ENCODE measurements at regions of chr21 and their contacts with region 1.

Region 1: GRCh38 chr21:42062236-42063022 is 8.7 kb upstream of the UMODL1 start:
- DNase-seq: peak; percentile 63 to 99 (median 97)
- ATAC-seq: peak; percentile 91
- H3K4me3 ChIP-seq: peak overlapping the region; percentile 64
- H3K4me3 Mint-ChIP-seq: peak overlapping the region; percentile 85 to 95 (median 92)
- H3K27ac ChIP-seq: peak overlapping the region; percentile 85
- H3K27ac Mint-ChIP-seq: peak overlapping the region; percentile 94 to 100 (median 99)
- H3K4me1 ChIP-seq: peaks cover 20 to 32% of the 10 kb centered on the region in 2 donors
- H3K4me1 Mint-ChIP-seq: peaks cover 28 to 76% (median 55%) of the 10 kb centered on the region in 7 donors
- H3K27me3 ChIP-seq: no peaks in the 10 kb centered on the region
- H3K27me3 Mint-ChIP-seq: peaks cover 0 to 5% (median 0%) of the 10 kb centered on the region in 5 donors

Region 2: DNA sequence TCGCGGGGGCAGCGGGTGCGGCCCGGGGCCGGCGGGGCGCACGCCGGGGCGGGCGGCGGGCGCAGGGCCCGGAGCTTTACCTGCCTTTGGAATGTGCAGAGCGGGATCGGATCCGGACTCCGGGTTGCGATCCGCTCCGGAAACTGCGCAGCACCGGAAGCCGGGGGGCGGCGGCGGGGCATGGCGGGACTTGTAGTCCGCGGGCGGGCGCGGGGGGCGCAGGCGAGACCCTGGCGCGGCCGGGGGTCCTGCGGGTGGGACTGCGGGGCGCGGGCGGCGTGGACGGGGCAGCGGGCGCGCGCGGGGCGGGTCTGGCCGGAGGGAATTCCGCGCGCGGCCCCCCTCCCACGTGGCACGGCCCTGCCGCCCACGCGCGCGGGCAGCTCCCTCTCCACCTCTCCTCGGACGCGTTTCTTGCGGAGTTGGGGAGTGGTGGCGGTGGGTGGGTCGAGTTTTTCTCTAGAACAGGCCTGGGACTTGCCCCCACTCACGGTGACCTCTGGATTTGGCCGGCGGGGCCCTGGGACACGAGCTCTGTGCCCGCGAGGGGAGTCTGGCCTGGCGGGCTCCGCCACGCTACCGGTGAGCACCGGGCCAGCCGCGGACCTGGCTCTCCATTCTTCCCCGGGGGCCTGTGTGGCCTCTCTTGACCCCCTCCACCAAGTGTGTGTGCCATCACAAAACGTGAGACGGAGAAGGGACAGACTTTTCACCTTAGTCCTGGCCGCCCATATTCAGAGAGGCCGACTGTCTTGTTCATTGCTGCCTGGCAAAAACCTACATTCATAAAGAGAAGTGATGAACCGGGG is 183.0 kb before region 1 on chr21 and contains the start of gene PRDM15:
- CTCF ChIA-PET with region 1: no interaction called
- POLR2A ChIA-PET with region 1: interaction called, 10 read pairs
- intact Hi-C with region 1: loop called (anchors 1 to 2 kb)
- DNase-seq: peak; percentile 69 to 88 (median 77)
- ATAC-seq: peak; percentile 85
- H3K4me3 ChIP-seq: peak within 1 kb of the TSS; percentile 84
- H3K4me3 Mint-ChIP-seq: peak within 1 kb of the TSS; percentile 88 to 95 (median 92)
- H3K27ac ChIP-seq: peak within 1 kb of the TSS; percentile 85
- H3K27ac Mint-ChIP-seq: peak within 1 kb of the TSS; percentile 92 to 97 (median 95)
- H3K4me1 ChIP-seq: peaks cover 9 to 16% of the 10 kb centered on the region in 2 donors
- H3K4me1 Mint-ChIP-seq: peaks cover 20 to 35% (median 29%) of the 10 kb centered on the region in 7 donors
- H3K27me3 ChIP-seq: no peaks in the 10 kb centered on the region
- H3K27me3 Mint-ChIP-seq: no peaks in the 10 kb centered on the region
- total RNA-seq, gene PRDM15: 10.0 to 20.1 (median 15.9) TPM

Region 3: DNA sequence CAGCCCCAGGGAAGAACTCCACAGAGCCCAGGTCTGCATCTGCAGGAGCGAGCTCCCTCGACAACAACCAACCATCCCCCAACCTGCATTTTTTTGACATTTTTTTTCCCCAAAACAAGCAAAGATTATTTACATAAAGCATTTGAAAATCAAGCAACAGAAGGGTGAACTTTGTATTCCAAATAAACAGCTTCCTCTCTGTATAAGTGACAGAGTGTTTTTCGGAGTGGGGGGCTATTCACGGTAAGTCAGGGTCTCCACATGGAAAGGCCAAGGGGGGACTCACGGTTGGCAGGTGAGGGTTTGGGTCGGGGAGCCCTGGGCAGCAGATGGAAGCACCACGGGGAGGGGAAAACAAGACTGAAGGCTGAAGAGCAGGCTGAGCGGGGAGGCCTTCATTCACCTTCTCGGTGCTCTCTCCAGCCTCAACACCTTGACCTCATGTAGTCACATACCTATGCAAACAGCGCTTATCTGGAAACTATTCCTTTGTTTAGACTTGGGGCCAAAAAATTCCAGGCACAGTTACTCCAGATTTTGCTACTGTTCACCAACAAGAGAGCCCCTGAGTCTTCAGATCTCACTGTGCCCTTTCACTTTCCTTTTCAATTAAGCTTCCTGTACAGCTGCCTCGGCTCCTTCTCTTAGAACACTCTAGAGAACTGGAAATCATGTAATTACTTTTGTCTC is 136.2 kb before region 1 on chr21:
- CTCF ChIA-PET with region 1: no interaction called
- POLR2A ChIA-PET with region 1: interaction called, 36 read pairs
- intact Hi-C with region 1: loop called (anchors 1 to 2 kb)
- DNase-seq: peak in 8 of 9 donors; percentile 36 to 75 (median 66)
- ATAC-seq: peak; percentile 85
- H3K4me3 ChIP-seq: peak overlapping the region; percentile 78
- H3K4me3 Mint-ChIP-seq: peak overlapping the region; percentile 88 to 99 (median 95)
- H3K27ac ChIP-seq: peak overlapping the region; percentile 91
- H3K27ac Mint-ChIP-seq: peak overlapping the region; percentile 94 to 100 (median 99)
- H3K4me1 ChIP-seq: peaks cover 12 to 37% of the 10 kb centered on the region in 2 donors
- H3K4me1 Mint-ChIP-seq: peaks cover 45 to 69% (median 61%) of the 10 kb centered on the region in 7 donors
- H3K27me3 ChIP-seq: no peaks in the 10 kb centered on the region
- H3K27me3 Mint-ChIP-seq: no peaks in the 10 kb centered on the region

Region 4: DNA sequence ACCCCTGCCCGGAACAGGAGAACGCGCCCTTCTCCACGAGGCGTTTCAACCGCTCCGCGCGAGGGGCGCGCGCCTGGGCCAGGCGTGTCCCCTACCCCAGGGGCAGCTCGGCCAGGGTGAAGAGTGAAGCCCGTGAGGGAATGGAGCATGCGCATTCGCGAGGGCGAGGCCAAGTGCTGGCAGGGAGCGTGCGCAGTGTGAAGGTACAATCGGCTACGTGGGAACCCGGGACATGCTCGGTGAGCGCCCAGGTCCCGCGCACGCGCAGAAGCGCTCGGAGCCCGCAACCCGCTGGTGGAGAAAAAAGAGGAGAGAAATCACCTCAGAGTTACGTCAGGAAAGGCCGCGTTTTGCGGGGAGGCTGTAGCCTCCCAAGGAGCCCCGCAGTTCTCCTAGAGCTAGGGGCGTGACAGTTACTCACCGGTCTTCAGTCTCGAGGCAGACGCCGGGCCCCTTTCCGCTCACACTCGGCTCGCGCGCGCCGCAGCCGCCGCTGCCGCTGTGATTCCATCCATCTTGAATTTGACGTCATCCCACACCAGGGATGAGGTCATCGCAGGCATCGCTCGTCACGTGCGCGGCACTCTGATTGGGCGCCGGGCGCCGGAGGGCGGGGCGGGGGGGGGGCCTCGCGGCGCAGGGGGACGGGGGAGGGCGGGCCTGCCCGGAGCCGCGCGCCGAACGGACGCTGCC is 52.5 kb before region 1 on chr21 and contains the start of gene ZBTB21:
- CTCF ChIA-PET with region 1: interaction called, 9 read pairs
- POLR2A ChIA-PET with region 1: interaction called, 122 read pairs
- intact Hi-C with region 1: loop called (anchors 1 kb)
- DNase-seq: peak; percentile 96 to 99 (median 98)
- ATAC-seq: peak; percentile 87
- H3K4me3 ChIP-seq: peak within 1 kb of the TSS; percentile 78
- H3K4me3 Mint-ChIP-seq: peak within 1 kb of the TSS; percentile 93 to 99 (median 96)
- H3K27ac ChIP-seq: peak within 1 kb of the TSS; percentile 92
- H3K27ac Mint-ChIP-seq: peak within 1 kb of the TSS; percentile 99 to 100 (median 99)
- H3K4me1 ChIP-seq: peaks cover 0 to 5% of the 10 kb centered on the region in 2 donors
- H3K4me1 Mint-ChIP-seq: peaks cover 7 to 48% (median 41%) of the 10 kb centered on the region in 7 donors
- H3K27me3 ChIP-seq: no peaks in the 10 kb centered on the region
- H3K27me3 Mint-ChIP-seq: peaks cover 0 to 24% (median 0%) of the 10 kb centered on the region in 5 donors
- total RNA-seq, gene ZBTB21: 16.8 to 137 (median 25.2) TPM

Region 5: DNA sequence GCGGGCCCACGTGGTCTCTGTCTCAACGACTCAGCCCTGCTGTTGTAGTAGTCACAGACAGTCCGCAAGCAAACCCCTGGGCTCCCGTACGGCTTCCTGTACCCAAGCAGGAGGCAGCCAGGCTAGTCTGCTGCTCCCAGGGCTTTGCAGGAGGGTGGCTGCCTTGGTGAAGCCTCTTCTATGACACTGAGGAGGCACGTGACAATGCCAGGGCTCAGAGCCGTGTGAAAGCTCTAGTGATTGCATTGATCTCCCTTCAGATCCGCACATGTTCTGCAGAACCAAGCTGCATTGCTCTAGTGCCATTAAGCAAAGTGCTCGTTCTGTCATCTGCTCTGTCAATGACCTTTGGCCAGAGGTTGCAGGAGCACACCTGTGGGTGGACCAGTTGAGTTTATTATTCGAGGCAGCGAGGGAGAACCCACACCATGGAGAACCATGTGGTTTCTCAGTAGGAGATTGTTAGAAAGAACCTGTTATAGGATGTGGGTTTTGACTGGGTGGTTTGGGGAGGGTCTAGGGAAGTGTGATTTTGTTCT is 26.7 kb after region 1 on chr21:
- CTCF ChIA-PET with region 1: no interaction called
- POLR2A ChIA-PET with region 1: interaction called, 6 read pairs
- intact Hi-C with region 1: loop called in 1 of 2 experiments (anchors 1 kb)
- DNase-seq: peak in 7 of 9 donors; percentile 20 to 73 (median 57)
- ATAC-seq: peak; percentile 60
- H3K4me3 ChIP-seq: no peak overlapping the region
- H3K4me3 Mint-ChIP-seq: peak overlapping the region; percentile 17 to 82 (median 68)
- H3K27ac ChIP-seq: peak overlapping the region; percentile 56
- H3K27ac Mint-ChIP-seq: peak overlapping the region in 8 of 9 donors; percentile 26 to 95 (median 84)
- H3K4me1 ChIP-seq: peaks cover 9 to 11% of the 10 kb centered on the region in 2 donors
- H3K4me1 Mint-ChIP-seq: peaks cover 9 to 50% (median 29%) of the 10 kb centered on the region in 7 donors
- H3K27me3 ChIP-seq: no peaks in the 10 kb centered on the region
- H3K27me3 Mint-ChIP-seq: peaks cover 0 to 12% (median 0%) of the 10 kb centered on the region in 5 donors

Region 6: DNA sequence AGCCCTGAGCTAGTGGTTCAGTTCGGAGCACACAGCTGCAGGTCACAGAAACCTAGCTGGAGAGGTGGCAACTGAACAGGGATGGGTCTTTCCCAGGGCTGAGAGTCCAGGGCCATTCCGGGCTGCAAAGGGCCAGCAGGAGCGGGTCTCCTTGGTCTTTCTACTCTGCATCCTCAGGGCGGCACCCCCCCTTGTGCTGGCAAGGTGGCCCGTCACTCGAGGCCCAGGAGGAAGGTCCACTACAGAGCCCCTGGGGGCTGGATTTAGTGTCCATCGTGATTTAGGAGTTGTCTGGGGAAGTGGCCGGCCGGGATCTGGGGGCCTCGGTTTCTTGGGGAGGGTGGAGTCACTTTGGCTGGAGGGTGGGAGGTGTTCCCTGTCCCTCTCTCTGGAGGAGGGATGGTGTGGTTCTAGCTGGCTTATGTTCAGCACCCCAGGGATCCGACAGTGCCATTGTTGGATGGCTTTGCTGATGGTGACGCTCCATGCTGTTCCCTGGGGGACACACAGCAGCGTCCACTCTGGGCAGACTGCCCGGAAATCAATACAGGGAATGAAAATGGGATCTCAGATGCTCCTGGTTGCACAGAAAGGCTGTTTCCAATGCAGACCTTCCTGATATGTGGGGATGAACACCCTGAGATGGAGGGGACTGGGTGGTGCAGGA is 73.1 kb after region 1 on chr21:
- CTCF ChIA-PET with region 1: no interaction called
- POLR2A ChIA-PET with region 1: no interaction called
- intact Hi-C with region 1: no loop called
- DNase-seq: no peak
- ATAC-seq: no peak
- H3K4me3 ChIP-seq: no peak overlapping the region
- H3K4me3 Mint-ChIP-seq: no peak overlapping the region
- H3K27ac ChIP-seq: no peak overlapping the region
- H3K27ac Mint-ChIP-seq: no peak overlapping the region
- H3K4me1 ChIP-seq: no peaks in the 10 kb centered on the region
- H3K4me1 Mint-ChIP-seq: peaks cover 0 to 8% (median 0%) of the 10 kb centered on the region in 7 donors
- H3K27me3 ChIP-seq: no peaks in the 10 kb centered on the region
- H3K27me3 Mint-ChIP-seq: peaks cover 0 to 3% (median 0%) of the 10 kb centered on the region in 5 donors

Region 7: GRCh38 chr21:42187976-42188653 is 125.7 kb after region 1 on chr21:
- CTCF ChIA-PET with region 1: no interaction called
- POLR2A ChIA-PET with region 1: no interaction called
- intact Hi-C with region 1: loop called in 1 of 2 experiments (anchors 1 kb)
- DNase-seq: peak; percentile 39 to 90 (median 86)
- ATAC-seq: peak; percentile 96
- H3K4me3 ChIP-seq: peak overlapping the region; percentile 25
- H3K4me3 Mint-ChIP-seq: peak overlapping the region; percentile 39 to 90 (median 75)
- H3K27ac ChIP-seq: peak overlapping the region; percentile 85
- H3K27ac Mint-ChIP-seq: peak overlapping the region; percentile 91 to 98 (median 95)
- H3K4me1 ChIP-seq: peaks cover 73 to 90% of the 10 kb centered on the region in 2 donors
- H3K4me1 Mint-ChIP-seq: peaks cover 34 to 83% (median 65%) of the 10 kb centered on the region in 7 donors
- H3K27me3 ChIP-seq: no peaks in the 10 kb centered on the region
- H3K27me3 Mint-ChIP-seq: peaks cover 0 to 8% (median 0%) of the 10 kb centered on the region in 5 donors

Region 8: GRCh38 chr21:42400525-42400924 is 338.1 kb after region 1 on chr21:
- CTCF ChIA-PET with region 1: no interaction called
- POLR2A ChIA-PET with region 1: no interaction called
- intact Hi-C with region 1: loop called in 1 of 2 experiments (anchors 5 kb)
- DNase-seq: peak in 1 of 9 donors; percentile 54
- ATAC-seq: no peak
- H3K4me3 ChIP-seq: no peak overlapping the region
- H3K4me3 Mint-ChIP-seq: peak overlapping the region in 4 of 10 donors; percentile 18 to 37 (median 32)
- H3K27ac ChIP-seq: no peak overlapping the region
- H3K27ac Mint-ChIP-seq: peak overlapping the region in 5 of 9 donors; percentile 8 to 87 (median 32)
- H3K4me1 ChIP-seq: peaks cover 21 to 42% of the 10 kb centered on the region in 2 donors
- H3K4me1 Mint-ChIP-seq: peaks cover 32 to 71% (median 61%) of the 10 kb centered on the region in 7 donors
- H3K27me3 ChIP-seq: no peaks in the 10 kb centered on the region
- H3K27me3 Mint-ChIP-seq: no peaks in the 10 kb centered on the region

Region 9: DNA sequence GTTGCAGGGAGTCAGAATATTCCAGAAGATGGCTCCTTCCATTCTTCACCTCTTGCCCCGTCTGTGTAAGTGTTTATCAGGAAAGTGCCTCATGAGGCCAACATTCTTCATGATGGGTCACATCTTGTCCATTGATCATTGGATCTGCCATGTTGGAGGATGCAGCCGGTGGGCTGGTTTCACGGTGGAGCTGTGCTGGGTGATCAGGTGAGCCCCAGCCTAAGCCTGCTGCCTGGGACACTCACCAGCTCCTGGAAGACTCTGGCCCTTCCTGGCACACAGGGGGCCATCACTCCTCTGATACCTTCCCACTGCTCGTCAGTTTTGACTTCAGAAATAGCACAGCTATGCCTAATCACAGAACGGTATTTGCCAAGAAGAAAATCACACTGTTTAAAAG is 379.5 kb after region 1 on chr21:
- CTCF ChIA-PET with region 1: no interaction called
- POLR2A ChIA-PET with region 1: no interaction called
- intact Hi-C with region 1: no loop called
- DNase-seq: no peak
- ATAC-seq: no peak
- H3K4me3 ChIP-seq: no peak overlapping the region
- H3K4me3 Mint-ChIP-seq: no peak overlapping the region
- H3K27ac ChIP-seq: no peak overlapping the region
- H3K27ac Mint-ChIP-seq: peak overlapping the region in 5 of 9 donors; percentile 16 to 73 (median 60)
- H3K4me1 ChIP-seq: peaks cover 0 to 10% of the 10 kb centered on the region in 2 donors
- H3K4me1 Mint-ChIP-seq: peaks cover 8 to 42% (median 29%) of the 10 kb centered on the region in 7 donors
- H3K27me3 ChIP-seq: no peaks in the 10 kb centered on the region
- H3K27me3 Mint-ChIP-seq: peaks cover 0 to 4% (median 0%) of the 10 kb centered on the region in 5 donors

Region 10: GRCh38 chr21:42973991-42974831 is 911.8 kb after region 1 on chr21 and contains the start of gene PKNOX1:
- CTCF ChIA-PET with region 1: no interaction called
- POLR2A ChIA-PET with region 1: no interaction called
- intact Hi-C with region 1: no loop called
- DNase-seq: peak; percentile 98 to 100 (median 99)
- ATAC-seq: peak; percentile 91
- H3K4me3 ChIP-seq: peak within 1 kb of the TSS; percentile 85
- H3K4me3 Mint-ChIP-seq: peak within 1 kb of the TSS; percentile 78 to 93 (median 88)
- H3K27ac ChIP-seq: peak within 1 kb of the TSS; percentile 94
- H3K27ac Mint-ChIP-seq: peak within 1 kb of the TSS; percentile 78 to 95 (median 93)
- H3K4me1 ChIP-seq: peaks cover 7 to 11% of the 10 kb centered on the region in 2 donors
- H3K4me1 Mint-ChIP-seq: peaks cover 0 to 36% (median 29%) of the 10 kb centered on the region in 7 donors
- H3K27me3 ChIP-seq: no peaks in the 10 kb centered on the region
- H3K27me3 Mint-ChIP-seq: no peaks in the 10 kb centered on the region
- total RNA-seq, gene PKNOX1: 14.7 to 24.7 (median 20.8) TPM

Measured in naive thymus-derived CD4-positive, alpha-beta T cell (primary cell).